Activated CD4-positive, alpha-beta memory T cell treated with anti-CD3 and anti-CD28 coated beads, Interleukin-2, amount 10 ng/mL, durations not matched to agents 7 days and 5 days (primary cell): ENCODE measurements at regions of chr9 and their contacts with region 1.

Region 1: DNA sequence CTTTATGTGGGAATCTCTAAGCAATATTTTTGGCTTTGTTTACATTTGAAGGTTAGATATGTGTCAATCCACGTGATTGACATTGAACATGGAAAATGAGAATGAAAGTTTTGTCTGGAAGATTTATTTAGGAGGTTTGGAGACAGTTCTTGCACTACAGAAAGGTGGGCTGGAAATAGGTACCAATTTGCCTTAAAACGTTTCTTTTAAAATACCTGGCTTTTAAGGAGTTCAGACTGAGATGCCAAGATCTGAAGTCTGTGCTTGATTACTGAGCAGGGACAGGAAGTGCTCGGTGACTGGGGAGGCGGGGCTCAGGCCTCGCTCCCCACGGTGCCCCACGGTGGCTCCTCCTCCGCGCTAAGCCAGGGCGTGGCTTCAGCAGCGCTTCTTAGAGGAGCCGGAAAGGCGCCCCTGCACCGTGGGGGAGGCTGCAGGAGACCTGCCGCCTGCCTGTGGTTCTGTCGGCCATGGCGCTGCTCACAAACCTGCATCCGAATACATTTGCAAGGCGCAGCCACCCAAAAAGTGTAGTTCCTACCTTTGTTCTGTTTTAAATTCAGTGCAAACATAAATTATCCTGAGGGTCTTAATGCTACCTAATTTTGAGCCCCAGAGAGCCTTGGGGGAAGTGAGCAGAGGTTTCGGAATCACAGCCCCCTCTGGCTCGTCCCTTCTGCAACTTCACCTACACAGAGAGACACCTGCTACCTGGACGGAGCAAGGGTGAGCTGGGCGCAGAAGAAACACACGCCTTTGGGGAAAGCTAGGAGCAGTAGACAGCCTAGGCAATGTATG is 49.2 kb downstream of the USP20 start:
- DNase-seq: peak; percentile 98
- H3K4me3 Mint-ChIP-seq: peak overlapping the region; percentile 80
- H3K27ac Mint-ChIP-seq: peak overlapping the region; percentile 100
- H3K4me1 Mint-ChIP-seq: peaks cover 51% of the 10 kb centered on the region
- H3K27me3 Mint-ChIP-seq: no peaks in the 10 kb centered on the region

Region 2: GRCh38 chr9:129752915-129753729 is 131.3 kb before region 1 on chr9 and contains the start of gene PTGES:
- CTCF ChIA-PET with region 1: no interaction called
- POLR2A ChIA-PET with region 1: no interaction called
- DNase-seq: peak; percentile 35
- H3K4me3 Mint-ChIP-seq: no peak within 1 kb of the TSS
- H3K27ac Mint-ChIP-seq: no peak within 1 kb of the TSS
- H3K4me1 Mint-ChIP-seq: peaks cover 17% of the 10 kb centered on the region
- H3K27me3 Mint-ChIP-seq: peaks cover 14% of the 10 kb centered on the region
- total RNA-seq, gene PTGES: not detected

Region 3: GRCh38 chr9:129863059-129863690 is 21.2 kb before region 1 on chr9:
- CTCF ChIA-PET with region 1: interaction called, 15 read pairs
- POLR2A ChIA-PET with region 1: interaction called, 301 read pairs
- DNase-seq: peak; percentile 92
- H3K4me3 Mint-ChIP-seq: peak overlapping the region; percentile 35
- H3K27ac Mint-ChIP-seq: peak overlapping the region; percentile 90
- H3K4me1 Mint-ChIP-seq: peaks cover 78% of the 10 kb centered on the region
- H3K27me3 Mint-ChIP-seq: no peaks in the 10 kb centered on the region

Region 4: DNA sequence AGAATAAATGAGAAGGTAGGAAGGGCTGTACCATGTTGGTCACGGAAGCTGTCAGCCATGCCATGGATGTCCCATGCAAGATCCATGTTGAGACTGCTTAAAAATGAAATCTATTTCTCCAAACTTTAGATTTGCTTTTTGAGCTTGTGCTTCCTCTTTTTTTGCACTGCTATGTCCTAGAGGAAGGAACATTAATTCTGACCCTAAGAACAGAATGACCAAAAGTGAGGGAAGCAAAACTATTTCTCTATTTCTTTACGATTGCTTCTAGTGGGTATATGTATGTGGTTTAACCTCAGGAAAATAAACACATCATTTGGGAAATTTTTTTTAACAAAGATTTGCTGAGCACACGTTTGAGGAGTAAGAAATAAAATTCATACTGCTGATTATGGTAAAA is 35.4 kb after region 1 on chr9:
- CTCF ChIA-PET with region 1: no interaction called
- POLR2A ChIA-PET with region 1: interaction called, 10 read pairs
- DNase-seq: no peak
- H3K4me3 Mint-ChIP-seq: peak overlapping the region; percentile 37
- H3K27ac Mint-ChIP-seq: peak overlapping the region; percentile 69
- H3K4me1 Mint-ChIP-seq: peaks cover 44% of the 10 kb centered on the region
- H3K27me3 Mint-ChIP-seq: no peaks in the 10 kb centered on the region

Region 5: DNA sequence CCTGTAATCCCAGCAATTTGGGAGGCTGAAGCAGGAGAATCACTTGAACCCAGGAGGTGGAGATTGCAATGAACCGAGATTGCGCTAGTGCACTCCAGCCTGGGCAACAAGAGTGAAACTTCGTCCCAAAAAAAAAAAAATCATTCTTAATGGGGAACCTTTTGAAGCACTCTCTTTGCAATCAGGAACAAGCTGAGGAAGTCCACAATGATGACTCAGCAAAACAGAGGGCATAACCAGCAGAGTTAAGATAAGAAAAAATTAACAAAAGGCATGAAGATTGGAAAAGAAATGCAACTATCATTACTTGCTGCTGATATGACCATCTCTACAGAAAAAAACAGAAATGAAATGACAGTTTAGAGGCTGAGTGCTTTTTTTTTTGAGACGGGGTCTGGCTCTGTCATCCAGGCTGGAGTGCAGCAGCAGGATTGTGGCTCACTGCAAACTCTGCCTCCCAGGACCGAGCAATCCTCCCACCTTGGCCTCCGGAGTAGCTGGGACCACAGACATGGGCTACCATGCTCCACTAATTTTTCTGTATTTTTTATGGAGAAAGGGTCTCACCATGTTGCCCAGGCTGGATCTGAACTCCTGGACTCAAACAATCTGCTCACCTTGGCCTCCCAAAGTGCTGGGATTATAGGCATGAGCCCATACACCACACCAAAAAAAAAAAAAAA is 70.6 kb after region 1 on chr9:
- CTCF ChIA-PET with region 1: interaction called, 8 read pairs
- POLR2A ChIA-PET with region 1: interaction called, 11 read pairs
- DNase-seq: no peak
- H3K4me3 Mint-ChIP-seq: no peak overlapping the region
- H3K27ac Mint-ChIP-seq: peak overlapping the region; percentile 24
- H3K4me1 Mint-ChIP-seq: peaks cover 56% of the 10 kb centered on the region
- H3K27me3 Mint-ChIP-seq: no peaks in the 10 kb centered on the region

Region 6: GRCh38 chr9:130010151-130010988 is 126.0 kb after region 1 on chr9:
- CTCF ChIA-PET with region 1: no interaction called
- POLR2A ChIA-PET with region 1: interaction called, 12 read pairs
- DNase-seq: no peak
- H3K4me3 Mint-ChIP-seq: no peak overlapping the region
- H3K27ac Mint-ChIP-seq: peak overlapping the region; percentile 66
- H3K4me1 Mint-ChIP-seq: peaks cover 78% of the 10 kb centered on the region
- H3K27me3 Mint-ChIP-seq: no peaks in the 10 kb centered on the region

Region 7: GRCh38 chr9:130053504-130054324 is 169.3 kb after region 1 on chr9 and contains the start of gene GPR107:
- CTCF ChIA-PET with region 1: interaction called, 11 read pairs
- POLR2A ChIA-PET with region 1: interaction called, 46 read pairs
- DNase-seq: peak; percentile 82
- H3K4me3 Mint-ChIP-seq: peak within 1 kb of the TSS; percentile 92
- H3K27ac Mint-ChIP-seq: peak within 1 kb of the TSS; percentile 91
- H3K4me1 Mint-ChIP-seq: peaks cover 42% of the 10 kb centered on the region
- H3K27me3 Mint-ChIP-seq: no peaks in the 10 kb centered on the region
- total RNA-seq, gene GPR107: 25.1 to 26.3 TPM

Region 8: GRCh38 chr9:130118841-130119518 is 234.6 kb after region 1 on chr9:
- CTCF ChIA-PET with region 1: no interaction called
- POLR2A ChIA-PET with region 1: no interaction called
- DNase-seq: no peak
- H3K4me3 Mint-ChIP-seq: no peak overlapping the region
- H3K27ac Mint-ChIP-seq: no peak overlapping the region
- H3K4me1 Mint-ChIP-seq: no peaks in the 10 kb centered on the region
- H3K27me3 Mint-ChIP-seq: no peaks in the 10 kb centered on the region